ENCODE measurements at regions of chr9 and their contacts with region 1.

Region 1: DNA sequence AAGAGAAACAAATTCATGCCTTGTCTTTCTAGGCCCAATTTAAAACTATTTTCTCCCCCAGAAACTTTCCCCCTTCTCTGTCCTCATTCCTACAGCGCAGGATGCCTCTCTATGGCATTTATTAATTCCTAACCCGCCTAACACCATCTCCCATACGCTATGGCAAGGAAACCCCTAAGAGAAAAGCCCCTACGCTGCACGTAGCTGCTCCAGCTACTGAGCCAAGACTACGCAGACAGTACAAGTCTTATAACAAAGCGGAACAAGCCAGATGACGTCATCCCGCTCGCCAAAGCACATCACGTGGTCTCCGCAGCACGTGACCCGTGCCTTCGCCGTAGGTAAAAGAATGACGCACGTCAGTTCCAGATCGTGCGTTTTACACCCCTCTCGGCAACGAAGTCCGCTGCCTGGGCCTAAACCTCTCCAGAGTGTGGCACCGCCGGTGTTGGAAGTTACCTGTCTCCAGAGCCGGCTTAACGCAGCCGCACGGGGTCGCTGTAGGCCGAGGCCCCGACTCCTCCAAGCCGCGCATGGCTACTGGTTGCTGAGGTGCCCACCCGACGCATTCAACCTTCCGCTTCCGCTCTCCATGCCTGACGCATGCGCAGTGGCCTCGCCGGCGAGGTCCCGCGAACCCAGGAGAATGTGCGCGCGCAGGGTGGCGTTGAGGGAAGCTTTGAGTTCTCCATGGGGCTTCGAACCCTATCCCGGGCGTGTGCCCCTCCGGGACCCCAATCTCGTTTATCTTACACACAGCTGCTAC is at the start of gene TRMO:
- DNase-seq: peak; percentile 97 to 99 (median 98)
- ATAC-seq: peak; percentile 75 to 79
- H3K4me3 Mint-ChIP-seq: peak within 1 kb of the TSS; percentile 86 to 95 (median 94)
- H3K27ac Mint-ChIP-seq: peak within 1 kb of the TSS; percentile 98 to 99 (median 99)
- H3K4me1 Mint-ChIP-seq: peaks cover 25 to 63% (median 51%) of the 10 kb centered on the region in 4 donors
- H3K27me3 Mint-ChIP-seq: peaks cover 0 to 5% (median 0%) of the 10 kb centered on the region in 5 donors
- polyA plus RNA-seq, gene TRMO: 11.7 to 18.0 (median 13.8) TPM

Region 2: GRCh38 chr9:97696803-97697601 is 225.1 kb before region 1 on chr9 and contains the start of gene XPA:
- POLR2A ChIA-PET with region 1: interaction called, 32 read pairs
- DNase-seq: peak; percentile 94 to 98 (median 96)
- ATAC-seq: peak; percentile 92 to 93
- H3K4me3 Mint-ChIP-seq: peak within 1 kb of the TSS; percentile 89 to 95 (median 92)
- H3K27ac Mint-ChIP-seq: peak within 1 kb of the TSS; percentile 90 to 98 (median 95)
- H3K4me1 Mint-ChIP-seq: peaks cover 33 to 65% (median 58%) of the 10 kb centered on the region in 4 donors
- H3K27me3 Mint-ChIP-seq: peaks cover 0 to 12% (median 3%) of the 10 kb centered on the region in 5 donors
- polyA plus RNA-seq, gene XPA: 34.8 to 39.2 (median 35.1) TPM

Region 3: GRCh38 chr9:97759581-97760288 is 162.4 kb before region 1 on chr9:
- POLR2A ChIA-PET with region 1: no interaction called
- DNase-seq: no peak
- ATAC-seq: no peak
- H3K4me3 Mint-ChIP-seq: no peak overlapping the region
- H3K27ac Mint-ChIP-seq: no peak overlapping the region
- H3K4me1 Mint-ChIP-seq: peaks cover 0 to 3% (median 0%) of the 10 kb centered on the region in 4 donors
- H3K27me3 Mint-ChIP-seq: peaks cover 12 to 51% (median 41%) of the 10 kb centered on the region in 5 donors

Region 4: GRCh38 chr9:97820373-97820772 is 101.8 kb before region 1 on chr9:
- POLR2A ChIA-PET with region 1: no interaction called
- DNase-seq: no peak
- ATAC-seq: no peak
- H3K4me3 Mint-ChIP-seq: no peak overlapping the region
- H3K27ac Mint-ChIP-seq: no peak overlapping the region
- H3K4me1 Mint-ChIP-seq: no peaks in the 10 kb centered on the region
- H3K27me3 Mint-ChIP-seq: peaks cover 31 to 62% (median 49%) of the 10 kb centered on the region in 5 donors

Region 5: DNA sequence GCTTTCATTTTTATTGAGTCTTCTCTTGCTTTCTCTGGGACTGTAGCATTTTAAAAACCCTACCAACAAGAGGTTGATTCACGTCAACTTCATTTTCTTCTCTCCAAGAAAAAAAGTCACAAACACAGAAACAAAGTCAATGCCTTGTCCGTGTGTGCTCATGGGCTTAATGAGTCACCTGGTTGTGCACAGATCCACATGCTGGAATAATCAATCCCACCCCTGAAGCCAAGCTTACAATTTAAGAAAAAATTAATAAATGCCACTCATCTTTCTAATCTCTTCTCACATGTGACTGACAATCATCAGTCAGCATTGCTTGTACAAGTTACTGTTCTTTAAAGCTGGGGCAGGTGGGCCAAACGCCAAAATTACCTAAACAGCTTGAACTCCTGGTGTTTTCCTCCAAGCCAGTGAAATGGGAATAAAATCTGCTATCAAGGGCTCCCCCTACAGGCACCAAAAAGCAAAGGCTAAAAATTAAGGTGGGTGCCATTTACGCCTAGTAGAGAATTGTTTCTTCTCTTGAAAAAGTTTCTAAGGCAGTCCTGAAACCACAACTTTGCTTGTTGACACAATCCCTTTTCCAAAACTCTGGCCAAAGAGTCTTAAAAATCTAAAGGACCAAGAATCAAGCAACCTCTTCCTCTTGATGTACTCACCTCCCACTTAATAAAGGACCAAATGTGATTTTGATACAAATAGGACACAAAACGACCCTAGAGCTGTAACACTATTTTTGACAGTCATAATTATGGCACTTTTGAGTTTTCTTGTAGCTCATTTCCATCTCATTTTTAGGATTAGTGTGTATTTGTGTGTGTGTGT is 21.2 kb before region 1 on chr9:
- POLR2A ChIA-PET with region 1: interaction called, 349 read pairs
- DNase-seq: peak in 5 of 10 donors; percentile 20 to 53 (median 41)
- ATAC-seq: no peak
- H3K4me3 Mint-ChIP-seq: peak overlapping the region in 2 of 10 donors; percentile 22 to 55
- H3K27ac Mint-ChIP-seq: peak overlapping the region; percentile 76 to 92 (median 82)
- H3K4me1 Mint-ChIP-seq: peaks cover 22 to 62% (median 59%) of the 10 kb centered on the region in 4 donors
- H3K27me3 Mint-ChIP-seq: no peaks in the 10 kb centered on the region

Region 6: DNA sequence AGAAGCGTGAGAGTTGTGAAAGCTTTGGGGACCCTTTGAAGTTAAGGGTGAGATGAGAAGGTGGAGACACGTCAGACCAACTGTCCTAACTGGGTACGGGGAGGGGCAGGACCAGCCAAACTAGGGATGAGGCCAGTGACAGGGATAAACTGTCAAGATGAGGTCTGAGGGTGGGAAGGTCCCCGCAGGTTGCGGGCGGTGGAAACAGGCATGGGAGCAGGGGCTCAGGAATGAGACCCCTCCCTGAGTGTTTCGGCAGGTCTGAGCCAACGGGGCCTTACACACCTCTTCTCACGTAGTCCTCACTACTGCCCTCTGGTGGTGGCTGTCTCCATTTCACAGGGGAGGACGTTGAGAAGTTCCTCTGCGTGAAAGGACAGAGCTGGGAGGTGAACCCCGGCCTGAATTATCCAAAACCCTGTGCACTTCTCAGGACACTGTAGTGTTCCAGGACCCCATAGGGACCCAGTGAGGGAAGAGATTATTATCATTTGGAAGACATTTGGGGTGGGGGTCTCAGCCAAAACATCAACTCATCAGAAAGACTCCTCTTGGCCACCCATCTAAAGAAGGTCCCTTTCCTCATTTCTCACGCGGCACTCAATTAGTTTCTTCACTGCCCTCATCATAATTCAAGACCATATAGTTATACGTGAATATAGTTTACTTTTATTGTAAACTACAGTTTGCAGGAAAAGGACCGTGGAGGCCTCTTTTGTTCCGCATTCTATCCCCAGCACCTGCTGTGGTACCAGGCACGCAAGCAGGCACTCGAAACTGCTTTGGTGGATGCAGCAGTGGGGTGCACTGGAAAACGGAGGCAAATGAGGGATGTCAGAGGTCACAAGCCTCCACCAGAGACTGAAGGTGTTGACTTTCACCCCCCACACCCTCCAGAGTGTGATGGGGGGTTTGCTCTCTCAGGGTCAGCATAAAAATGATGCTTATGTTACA is 112.7 kb after region 1 on chr9:
- POLR2A ChIA-PET with region 1: interaction called, 22 read pairs
- DNase-seq: peak; percentile 76 to 95 (median 87)
- ATAC-seq: peak; percentile 100
- H3K4me3 Mint-ChIP-seq: peak overlapping the region; percentile 16 to 58 (median 40)
- H3K27ac Mint-ChIP-seq: peak overlapping the region in 7 of 10 donors; percentile 48 to 88 (median 68)
- H3K4me1 Mint-ChIP-seq: peaks cover 3 to 11% (median 8%) of the 10 kb centered on the region in 4 donors
- H3K27me3 Mint-ChIP-seq: peaks cover 0 to 3% (median 1%) of the 10 kb centered on the region in 5 donors

Region 7: DNA sequence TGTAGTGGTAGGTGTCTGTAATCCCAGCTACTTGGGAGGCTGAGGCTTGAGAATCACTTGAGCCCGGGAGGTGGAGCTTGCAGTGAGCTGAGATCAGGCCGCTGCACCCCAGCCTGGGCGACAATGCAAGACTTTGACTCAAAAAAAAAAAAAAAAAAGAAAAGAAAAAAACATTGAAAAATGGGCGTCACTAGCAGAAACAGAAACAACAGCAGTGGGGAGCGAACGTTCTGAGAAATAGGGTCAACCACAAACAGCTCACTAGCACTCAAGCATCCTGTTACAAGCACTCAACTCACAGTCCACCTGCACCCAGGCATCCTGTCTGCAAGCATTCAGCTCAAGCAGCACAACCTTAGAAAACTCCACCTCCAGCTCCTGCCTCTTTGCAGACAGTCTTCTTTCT is 179.7 kb after region 1 on chr9:
- POLR2A ChIA-PET with region 1: interaction called, 26 read pairs
- DNase-seq: peak; percentile 59 to 94 (median 80)
- ATAC-seq: peak; percentile 96 to 98
- H3K4me3 Mint-ChIP-seq: peak overlapping the region; percentile 60 to 86 (median 74)
- H3K27ac Mint-ChIP-seq: peak overlapping the region; percentile 88 to 99 (median 96)
- H3K4me1 Mint-ChIP-seq: peaks cover 38 to 93% (median 84%) of the 10 kb centered on the region in 4 donors
- H3K27me3 Mint-ChIP-seq: no peaks in the 10 kb centered on the region

Region 8: DNA sequence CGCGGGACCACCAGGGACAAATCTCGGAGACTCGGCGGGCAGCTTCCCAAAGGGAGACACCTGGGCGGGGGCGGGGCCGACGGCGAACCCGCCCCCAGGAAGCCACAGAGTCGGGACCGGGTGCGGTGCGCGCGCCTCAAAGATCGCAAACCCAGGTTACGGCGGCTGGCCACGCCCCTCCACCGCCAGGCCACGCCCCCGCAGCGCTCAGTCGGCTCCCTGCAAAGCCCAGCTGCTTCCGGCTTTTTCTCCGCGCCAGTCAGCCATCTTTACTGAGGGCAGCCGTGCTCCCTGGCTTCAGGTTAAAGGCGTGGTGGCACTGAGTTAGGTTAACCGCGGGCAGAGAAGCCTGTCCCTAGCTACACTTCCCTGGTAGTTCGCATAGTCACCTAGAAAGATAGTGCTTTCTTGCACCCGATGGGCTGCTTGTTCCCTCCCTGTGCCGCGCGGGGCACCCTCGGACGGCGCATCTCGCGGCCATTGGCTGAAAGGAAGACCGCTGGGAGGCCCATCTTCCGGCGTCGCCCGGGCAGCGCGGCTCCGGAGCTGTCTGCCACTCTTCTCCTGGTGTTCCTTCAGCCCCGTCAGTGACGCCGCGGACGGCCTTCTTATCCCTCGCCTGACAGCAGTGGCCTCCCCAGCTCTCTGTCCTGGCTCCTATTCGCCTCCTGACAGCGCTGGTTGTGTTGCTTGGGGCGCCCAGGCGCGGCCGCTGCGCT is 333.6 kb after region 1 on chr9 and contains the start of gene TBC1D2:
- POLR2A ChIA-PET with region 1: interaction called, 60 read pairs
- DNase-seq: peak; percentile 95 to 99 (median 98)
- ATAC-seq: peak; percentile 85 to 87
- H3K4me3 Mint-ChIP-seq: peak within 1 kb of the TSS; percentile 93 to 98 (median 96)
- H3K27ac Mint-ChIP-seq: peak within 1 kb of the TSS; percentile 94 to 98 (median 96)
- H3K4me1 Mint-ChIP-seq: peaks cover 19 to 40% (median 35%) of the 10 kb centered on the region in 4 donors
- H3K27me3 Mint-ChIP-seq: no peaks in the 10 kb centered on the region
- polyA plus RNA-seq, gene TBC1D2: 2.0 to 5.9 (median 2.8) TPM

Measured in naive thymus-derived CD8-positive, alpha-beta T cell (primary cell).